AG04450 (cell line): ENCODE measurements at regions of chr19 and their contacts with region 1.

Region 1: GRCh38 chr19:50461066-50461875 is 15.0 kb upstream of the EMC10 start:
- DNase-seq: peak; percentile 29
- H3K4me3 ChIP-seq: no peak overlapping the region
- H3K27ac ChIP-seq: no peak overlapping the region
- H3K27me3 ChIP-seq: peaks cover 11% of the 10 kb centered on the region
- CTCF ChIP-seq: peak; percentile 91

Region 2: DNA sequence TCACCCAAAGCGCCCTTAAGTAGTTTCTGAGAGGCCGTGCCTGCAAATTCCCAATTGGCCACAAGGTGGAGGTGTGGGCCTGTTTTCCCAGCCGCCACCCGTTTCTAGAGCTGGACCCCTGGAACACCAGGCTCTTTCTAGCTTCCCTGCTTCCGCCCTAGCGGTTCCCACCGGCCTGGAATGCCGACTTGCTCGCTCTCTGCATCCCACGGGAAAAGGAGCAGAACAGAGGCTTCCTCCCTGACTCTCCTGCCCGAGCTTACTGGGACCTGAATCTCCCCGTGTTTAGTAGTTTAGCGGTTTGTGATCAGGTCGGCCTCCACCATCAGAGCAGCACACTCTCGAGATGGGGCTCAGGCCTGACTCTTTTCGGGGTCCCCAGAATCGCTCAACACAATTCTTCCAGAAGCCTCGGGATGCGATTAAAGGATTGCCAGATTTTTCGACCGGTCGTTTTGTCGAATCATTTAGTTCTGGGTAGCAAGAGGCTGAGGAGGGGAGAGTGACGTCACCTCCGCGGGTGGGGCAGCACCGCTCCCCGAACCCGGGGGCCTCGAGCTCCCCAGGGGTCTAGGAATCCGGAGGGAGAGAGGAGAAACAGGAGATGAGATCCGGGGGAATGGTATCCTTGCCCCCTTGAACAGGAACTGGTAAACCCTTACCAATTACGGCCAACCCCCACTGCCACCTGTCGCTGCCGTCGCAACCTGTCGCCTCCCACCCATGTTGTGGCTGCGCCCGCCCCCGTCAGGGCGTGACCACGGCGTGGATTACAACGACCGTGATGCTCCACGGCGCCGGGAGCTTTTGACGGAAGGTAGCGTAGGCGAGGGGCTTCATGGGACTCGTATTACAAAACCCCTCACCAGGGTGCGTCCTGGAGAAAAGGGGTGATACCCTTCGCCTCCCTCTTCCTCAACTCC is 103.8 kb before region 1 on chr19:
- CTCF ChIA-PET with region 1: interaction called, 22 read pairs
- POLR2A ChIA-PET with region 1: interaction called, 3 read pairs
- DNase-seq: no peak
- H3K4me3 ChIP-seq: peak overlapping the region; percentile 44
- H3K27ac ChIP-seq: no peak overlapping the region
- H3K27me3 ChIP-seq: no peaks in the 10 kb centered on the region
- CTCF ChIP-seq: peak; percentile 85

Region 3: DNA sequence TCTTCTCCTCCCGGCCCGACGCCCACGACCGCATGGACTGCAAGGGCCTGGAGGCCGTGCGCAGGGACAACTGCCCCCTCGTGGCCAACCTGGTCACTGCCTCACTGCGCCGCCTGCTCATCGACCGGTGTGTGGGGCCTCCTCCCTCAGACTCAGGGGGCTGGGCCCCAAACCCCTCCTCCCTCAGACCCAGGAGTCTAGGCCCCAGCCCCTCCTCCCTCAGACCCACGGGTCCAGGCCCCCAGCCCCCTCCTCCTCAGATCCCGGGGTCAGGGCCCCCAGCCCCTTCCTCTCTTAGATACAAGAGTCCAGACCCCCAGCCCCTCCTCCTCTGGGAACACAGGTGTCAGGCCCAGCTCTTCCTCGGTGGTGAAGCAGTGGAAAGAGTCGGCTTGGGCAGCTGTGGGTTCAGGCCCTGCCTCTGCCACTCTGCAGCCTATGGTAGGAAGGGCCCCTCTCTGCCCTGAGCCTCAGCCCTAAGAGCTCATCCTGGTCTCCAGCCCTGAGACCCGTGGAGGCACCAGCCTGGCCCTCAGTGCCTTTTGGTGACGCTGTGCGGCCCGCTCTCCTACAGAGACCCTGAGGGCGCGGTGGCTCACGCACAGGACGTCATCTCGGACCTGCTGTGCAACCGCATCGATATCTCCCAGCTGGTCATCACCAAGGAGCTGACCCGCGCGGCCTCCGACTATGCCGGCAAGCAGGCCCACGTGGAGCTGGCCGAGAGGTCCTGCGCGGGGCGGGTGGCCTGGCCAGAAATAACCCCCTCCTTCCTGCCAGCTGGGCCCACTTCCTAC is 46.2 kb before region 1 on chr19:
- CTCF ChIA-PET with region 1: no interaction called
- POLR2A ChIA-PET with region 1: no interaction called
- DNase-seq: peak; percentile 7
- H3K4me3 ChIP-seq: no peak overlapping the region
- H3K27ac ChIP-seq: no peak overlapping the region
- H3K27me3 ChIP-seq: peaks cover 13% of the 10 kb centered on the region
- CTCF ChIP-seq: peak; percentile 80